Activated CD4-positive, alpha-beta T cell treated with anti-CD3 and anti-CD28 coated beads, Interleukin-2, amount 10 ng/mL, durations not matched to agents 24 days and 14 days (primary cell): ENCODE measurements at regions of chr3 and their contacts with region 1.

Region 1: DNA sequence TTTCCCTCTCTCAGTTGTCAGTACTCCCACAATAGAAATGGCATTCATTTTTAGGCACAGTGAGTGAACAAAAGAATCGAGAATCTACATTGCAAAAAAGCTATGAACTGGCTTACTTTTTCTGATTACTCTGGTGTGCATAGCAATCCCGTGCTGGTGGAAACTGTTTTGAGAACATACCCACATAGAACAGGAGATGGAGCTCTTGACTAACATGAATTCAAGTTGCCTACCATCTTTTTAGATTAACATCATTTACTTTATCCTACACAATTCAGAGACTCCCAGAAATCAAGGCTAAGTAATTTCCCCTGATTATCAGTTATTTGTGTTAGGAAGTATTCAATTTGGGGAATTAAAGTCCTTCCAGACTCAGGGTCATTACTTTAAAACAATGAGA is 326.6 kb downstream of the ARPP21 start:
- DNase-seq: no peak
- H3K4me3 Mint-ChIP-seq: no peak overlapping the region
- H3K27ac Mint-ChIP-seq: no peak overlapping the region
- H3K4me1 Mint-ChIP-seq: peaks cover 1% of the 10 kb centered on the region
- H3K27me3 Mint-ChIP-seq: no peaks in the 10 kb centered on the region

Region 2: GRCh38 chr3:36075491-36075890 is 109.6 kb after region 1 on chr3:
- intact Hi-C with region 1: no loop called
- DNase-seq: no peak
- H3K4me3 Mint-ChIP-seq: no peak overlapping the region
- H3K27ac Mint-ChIP-seq: no peak overlapping the region
- H3K4me1 Mint-ChIP-seq: no peaks in the 10 kb centered on the region
- H3K27me3 Mint-ChIP-seq: no peaks in the 10 kb centered on the region

Region 3: DNA sequence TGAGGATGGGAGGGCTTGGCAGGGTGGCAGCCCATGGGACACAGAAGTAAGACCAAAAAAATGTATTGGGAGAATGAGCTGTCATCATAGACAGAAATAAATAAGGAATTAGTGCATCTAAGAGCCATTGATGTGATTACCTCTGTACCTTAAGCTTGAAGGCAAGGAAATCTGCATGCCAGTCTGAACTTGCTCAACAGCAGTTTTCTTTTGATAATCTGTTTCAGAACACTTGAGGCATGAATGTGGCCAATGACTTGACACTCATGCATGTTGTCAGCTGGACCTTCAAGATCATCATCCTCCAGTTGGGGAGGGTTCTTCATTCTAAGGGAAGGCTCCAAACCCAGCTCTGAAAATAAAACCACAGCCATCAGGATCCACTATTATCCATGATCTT is 650.0 kb after region 1 on chr3:
- intact Hi-C with region 1: no loop called
- DNase-seq: no peak
- H3K4me3 Mint-ChIP-seq: no peak overlapping the region
- H3K27ac Mint-ChIP-seq: no peak overlapping the region
- H3K4me1 Mint-ChIP-seq: no peaks in the 10 kb centered on the region
- H3K27me3 Mint-ChIP-seq: peaks cover 6% of the 10 kb centered on the region

Region 4: DNA sequence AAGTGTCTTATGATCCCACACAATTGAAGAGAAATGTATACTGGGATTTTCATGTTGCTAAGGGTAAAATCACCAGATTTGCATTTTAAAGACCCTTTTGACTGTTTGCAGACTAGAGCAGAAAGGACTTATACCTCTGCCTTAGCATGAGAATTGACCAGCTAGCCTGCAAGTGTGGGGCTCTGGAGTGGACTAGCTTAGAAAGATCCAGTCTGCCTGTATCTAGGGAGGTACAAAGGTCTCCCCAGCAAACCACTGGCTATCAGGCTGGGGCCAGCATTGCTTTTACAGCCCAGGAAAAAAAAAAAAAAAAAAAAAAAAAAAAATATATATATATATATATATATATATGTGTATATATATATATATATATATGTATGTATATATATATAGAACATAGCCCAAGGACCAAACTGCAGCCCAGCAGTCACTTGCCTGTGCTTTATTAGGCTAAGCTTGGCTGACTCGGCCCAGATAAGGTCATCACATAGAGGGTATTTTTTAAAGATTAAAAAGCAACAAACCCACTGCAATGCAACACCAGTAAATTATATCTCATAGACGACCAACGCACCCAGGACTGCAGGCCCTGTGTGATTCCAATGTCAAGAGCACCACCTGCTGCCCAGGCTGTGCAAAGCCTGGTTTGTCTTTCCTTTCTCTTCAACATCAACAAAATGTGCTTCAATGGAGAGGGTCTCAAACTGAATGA is 734.8 kb after region 1 on chr3:
- intact Hi-C with region 1: loop called (anchors 10 kb)
- DNase-seq: peak; percentile 77
- H3K4me3 Mint-ChIP-seq: no peak overlapping the region
- H3K27ac Mint-ChIP-seq: no peak overlapping the region
- H3K4me1 Mint-ChIP-seq: no peaks in the 10 kb centered on the region
- H3K27me3 Mint-ChIP-seq: peaks cover 2% of the 10 kb centered on the region